T-cell (primary cell): ENCODE measurements at regions of chr12 and their contacts with region 1.

Region 1: DNA sequence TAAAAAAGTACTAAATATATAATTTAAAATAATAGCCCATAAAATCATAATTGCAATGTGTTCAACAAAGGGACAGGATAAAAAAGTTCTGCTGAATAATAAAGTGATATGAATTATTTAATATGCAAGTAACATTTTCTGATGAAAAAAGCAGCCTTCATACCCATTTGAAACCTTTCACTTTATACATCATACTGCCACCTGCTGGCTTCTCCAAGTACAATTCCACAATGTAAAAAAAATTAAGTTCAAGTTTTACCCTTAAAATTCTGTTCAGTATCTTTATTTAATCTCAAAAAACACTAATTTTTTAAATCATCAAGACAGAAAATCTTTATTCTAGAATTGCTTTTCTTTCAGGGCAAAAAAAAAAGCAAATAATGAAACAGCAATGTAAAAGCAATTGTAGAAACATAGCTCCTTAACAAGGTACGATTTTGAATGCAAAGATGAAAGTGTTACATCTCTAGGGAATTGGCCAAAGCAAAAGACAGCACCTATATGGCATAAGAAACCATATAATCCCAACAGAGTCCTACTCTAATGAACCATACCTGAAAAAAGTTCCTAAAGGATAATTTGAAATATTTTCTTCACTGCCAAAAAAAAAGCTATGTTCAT is 15.0 kb downstream of the MDM1 start:
- DNase-seq: peak in 24 of 35 experiments; percentile 4 to 78 (median 34)
- ATAC-seq: no peak
- H3K4me3 ChIP-seq: no peak overlapping the region
- H3K4me3 Mint-ChIP-seq: no peak overlapping the region
- H3K27ac ChIP-seq: no peak overlapping the region
- H3K27ac Mint-ChIP-seq: no peak overlapping the region
- H3K4me1 ChIP-seq: no peaks in the 10 kb centered on the region
- H3K4me1 Mint-ChIP-seq: no peaks in the 10 kb centered on the region
- H3K27me3 ChIP-seq: no peaks in the 10 kb centered on the region
- H3K27me3 Mint-ChIP-seq: no peaks in the 10 kb centered on the region

Region 2: GRCh38 chr12:68040450-68041075 is 276.6 kb before region 1 on chr12:
- CTCF ChIA-PET with region 1: interaction called, 10 to 23 read pairs
- POLR2A ChIA-PET with region 1: interaction called in 1 of 2 experiments, 5 read pairs
- DNase-seq: peak in 34 of 35 experiments; percentile 8 to 85 (median 52)
- ATAC-seq: peak; percentile 66 to 85 (median 80)
- H3K4me3 ChIP-seq: no peak overlapping the region
- H3K4me3 Mint-ChIP-seq: no peak overlapping the region
- H3K27ac ChIP-seq: no peak overlapping the region
- H3K27ac Mint-ChIP-seq: no peak overlapping the region
- H3K4me1 ChIP-seq: peaks cover 0 to 10% of the 10 kb centered on the region in 2 experiments
- H3K4me1 Mint-ChIP-seq: peaks cover 6 to 17% (median 13%) of the 10 kb centered on the region in 3 donors
- H3K27me3 ChIP-seq: no peaks in the 10 kb centered on the region
- H3K27me3 Mint-ChIP-seq: no peaks in the 10 kb centered on the region

Region 3: DNA sequence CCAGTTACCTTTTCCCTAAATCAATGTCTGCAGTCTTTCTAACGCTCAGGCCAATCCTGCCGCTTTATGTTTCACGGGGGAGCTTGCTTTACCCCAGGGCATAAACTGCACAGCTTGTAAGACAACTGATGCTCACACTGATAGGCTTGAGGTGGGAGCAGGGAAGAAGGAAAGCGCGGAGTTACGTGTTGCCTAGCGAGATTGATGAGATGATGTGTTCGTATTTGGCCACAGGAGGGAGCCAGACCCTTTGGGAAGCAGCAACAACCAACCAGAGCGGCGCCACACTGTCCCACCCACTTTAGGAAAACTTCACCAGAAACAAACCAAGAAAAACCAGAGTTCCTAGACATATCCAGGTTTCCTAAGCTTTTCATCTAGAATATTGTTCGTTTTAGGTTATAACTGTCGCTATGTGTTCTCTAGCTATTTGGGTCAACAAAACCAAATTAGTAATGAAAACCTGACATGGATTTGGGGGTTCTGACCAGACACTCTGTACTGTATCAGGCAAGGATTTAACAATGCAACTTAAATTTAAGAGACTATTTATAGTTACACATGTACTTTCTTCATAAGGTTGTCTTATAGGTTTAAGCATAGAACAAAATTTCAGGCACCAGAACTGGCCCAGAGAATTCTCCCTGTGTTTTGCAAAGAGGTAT is 93.9 kb before region 1 on chr12:
- CTCF ChIA-PET with region 1: interaction called, 31 to 69 read pairs
- POLR2A ChIA-PET with region 1: no interaction called
- DNase-seq: peak; percentile 19 to 90 (median 60)
- ATAC-seq: peak; percentile 95 to 99 (median 95)
- H3K4me3 ChIP-seq: no peak overlapping the region
- H3K4me3 Mint-ChIP-seq: peak overlapping the region; percentile 32 to 60 (median 50)
- H3K27ac ChIP-seq: no peak overlapping the region
- H3K27ac Mint-ChIP-seq: peak overlapping the region in 1 of 2 donors; percentile 77
- H3K4me1 ChIP-seq: peaks cover 0 to 4% of the 10 kb centered on the region in 2 experiments
- H3K4me1 Mint-ChIP-seq: peaks cover 7 to 17% (median 8%) of the 10 kb centered on the region in 3 donors
- H3K27me3 ChIP-seq: no peaks in the 10 kb centered on the region
- H3K27me3 Mint-ChIP-seq: peaks cover 0 to 5% of the 10 kb centered on the region in 2 donors

Region 4: GRCh38 chr12:68440068-68440581 is 123.0 kb after region 1 on chr12:
- CTCF ChIA-PET with region 1: no interaction called
- POLR2A ChIA-PET with region 1: interaction called in 1 of 2 experiments, 14 read pairs
- DNase-seq: no peak
- ATAC-seq: no peak
- H3K4me3 ChIP-seq: no peak overlapping the region
- H3K4me3 Mint-ChIP-seq: no peak overlapping the region
- H3K27ac ChIP-seq: peak overlapping the region; percentile 20
- H3K27ac Mint-ChIP-seq: peak overlapping the region; percentile 28 to 33
- H3K4me1 ChIP-seq: peaks cover 4 to 21% of the 10 kb centered on the region in 2 experiments
- H3K4me1 Mint-ChIP-seq: peaks cover 23 to 46% (median 32%) of the 10 kb centered on the region in 3 donors
- H3K27me3 ChIP-seq: no peaks in the 10 kb centered on the region
- H3K27me3 Mint-ChIP-seq: no peaks in the 10 kb centered on the region